Right cardiac atrium (tissue), 5 donors: ENCODE measurements at regions of chr15 and their contacts with region 1.

Region 1: GRCh38 chr15:83747050-83747717 is 93.3 kb downstream of the ADAMTSL3 start:
- DNase-seq: peak in 1 of 3 donors; percentile 26
- ATAC-seq: peak; percentile 86
- H3K4me3 ChIP-seq: no peak overlapping the region
- H3K27ac ChIP-seq: peak overlapping the region; percentile 89
- H3K4me1 ChIP-seq: peaks cover 5% of the 10 kb centered on the region
- H3K27me3 ChIP-seq: no peaks in the 10 kb centered on the region

Region 2: DNA sequence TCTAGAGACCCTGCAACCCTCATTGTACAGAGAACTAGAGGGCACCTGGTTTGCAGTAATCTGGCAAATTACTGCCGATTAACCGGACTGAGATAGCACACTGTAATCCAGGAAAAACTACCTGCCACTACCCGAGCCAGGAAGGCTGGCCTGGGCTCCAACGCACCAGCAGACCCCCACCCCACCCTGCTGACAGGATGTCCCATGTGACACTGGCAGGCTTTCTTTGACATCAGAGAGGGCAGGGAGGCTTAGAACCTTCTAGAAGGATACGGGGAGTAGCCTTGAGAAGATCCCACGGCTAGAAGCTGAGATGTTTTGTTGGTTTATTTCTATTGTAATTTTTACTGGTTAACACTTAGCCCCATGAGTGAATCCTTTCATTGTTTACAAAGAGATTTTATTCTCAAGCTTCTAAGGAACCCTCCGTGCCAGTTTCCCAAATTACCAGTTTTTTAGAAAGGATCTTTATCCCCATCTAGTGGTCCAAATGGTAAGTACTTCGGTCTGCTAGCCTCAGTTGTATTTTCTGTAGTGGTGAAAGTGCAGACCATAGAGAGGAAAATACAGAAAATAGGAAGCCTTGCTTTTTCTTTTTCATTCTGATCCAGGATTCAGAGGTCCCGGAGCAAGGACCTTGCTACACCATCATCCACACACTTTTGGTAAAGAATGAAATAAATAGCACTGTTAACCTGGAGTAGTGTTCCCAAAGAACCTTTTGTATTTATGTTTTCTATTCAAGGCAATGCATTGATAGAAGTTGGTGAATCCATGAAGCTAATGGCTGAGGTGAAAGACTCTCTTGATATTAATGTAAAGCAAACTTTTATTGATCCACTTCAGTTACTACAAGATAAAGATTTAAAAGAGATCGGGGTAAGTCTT is 175.1 kb before region 1 on chr15:
- intact Hi-C with region 1: loop called in 2 of 4 experiments (anchors 10 kb)
- DNase-seq: no peak
- ATAC-seq: peak in 1 of 2 donors; percentile 43
- H3K4me3 ChIP-seq: no peak overlapping the region
- H3K27ac ChIP-seq: no peak overlapping the region
- H3K4me1 ChIP-seq: no peaks in the 10 kb centered on the region
- H3K27me3 ChIP-seq: no peaks in the 10 kb centered on the region

Region 3: GRCh38 chr15:83653639-83654378 is 93.4 kb before region 1 on chr15 and contains the start of gene ADAMTSL3:
- intact Hi-C with region 1: loop called in 3 of 4 experiments (anchors 5 to 10 kb)
- DNase-seq: peak; percentile 91 to 96 (median 96)
- ATAC-seq: peak; percentile 75 to 79
- H3K4me3 ChIP-seq: peak within 1 kb of the TSS; percentile 64
- H3K27ac ChIP-seq: peak within 1 kb of the TSS; percentile 84
- H3K4me1 ChIP-seq: peaks cover 14% of the 10 kb centered on the region
- H3K27me3 ChIP-seq: no peaks in the 10 kb centered on the region
- total RNA-seq, gene ADAMTSL3: 31.3 to 50.2 (median 47.1) TPM

Region 4: DNA sequence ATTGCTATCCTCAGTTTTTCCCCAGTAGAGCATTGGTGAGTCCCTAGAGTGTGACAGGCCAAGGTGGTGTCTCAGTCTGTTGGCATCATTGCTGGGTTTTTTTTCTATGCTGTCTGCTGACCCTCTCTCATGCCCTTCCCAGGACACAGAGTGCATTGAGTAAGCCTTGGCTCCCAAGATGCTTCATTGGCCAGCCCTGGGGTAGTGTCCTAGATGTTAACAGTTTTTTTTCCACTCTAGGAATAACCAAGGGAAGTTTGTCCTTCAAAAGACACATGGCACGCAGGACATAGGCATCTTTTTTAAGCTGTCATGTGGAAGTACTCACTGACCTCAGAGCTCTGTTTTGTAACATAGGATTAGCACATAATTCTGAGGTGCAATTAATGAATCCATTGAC is 73.8 kb before region 1 on chr15:
- intact Hi-C with region 1: loop called in 1 of 4 experiments (anchors 5 kb)
- DNase-seq: peak in 1 of 3 donors; percentile 60
- ATAC-seq: peak; percentile 90 to 92
- H3K4me3 ChIP-seq: no peak overlapping the region
- H3K27ac ChIP-seq: peak overlapping the region; percentile 60
- H3K4me1 ChIP-seq: no peaks in the 10 kb centered on the region
- H3K27me3 ChIP-seq: no peaks in the 10 kb centered on the region

Region 5: GRCh38 chr15:83698294-83698693 is 48.9 kb before region 1 on chr15:
- intact Hi-C with region 1: loop called in 1 of 4 experiments (anchors 10 kb)
- DNase-seq: peak; percentile 69 to 81 (median 80)
- ATAC-seq: peak; percentile 61 to 73
- H3K4me3 ChIP-seq: no peak overlapping the region
- H3K27ac ChIP-seq: peak overlapping the region; percentile 25
- H3K4me1 ChIP-seq: peaks cover 20% of the 10 kb centered on the region
- H3K27me3 ChIP-seq: no peaks in the 10 kb centered on the region